Activated B cell treated with CpG ODN at 0.5 μM for 24 hours (primary cell): ENCODE measurements at regions of chr17 and their contacts with region 1.

Region 1: DNA sequence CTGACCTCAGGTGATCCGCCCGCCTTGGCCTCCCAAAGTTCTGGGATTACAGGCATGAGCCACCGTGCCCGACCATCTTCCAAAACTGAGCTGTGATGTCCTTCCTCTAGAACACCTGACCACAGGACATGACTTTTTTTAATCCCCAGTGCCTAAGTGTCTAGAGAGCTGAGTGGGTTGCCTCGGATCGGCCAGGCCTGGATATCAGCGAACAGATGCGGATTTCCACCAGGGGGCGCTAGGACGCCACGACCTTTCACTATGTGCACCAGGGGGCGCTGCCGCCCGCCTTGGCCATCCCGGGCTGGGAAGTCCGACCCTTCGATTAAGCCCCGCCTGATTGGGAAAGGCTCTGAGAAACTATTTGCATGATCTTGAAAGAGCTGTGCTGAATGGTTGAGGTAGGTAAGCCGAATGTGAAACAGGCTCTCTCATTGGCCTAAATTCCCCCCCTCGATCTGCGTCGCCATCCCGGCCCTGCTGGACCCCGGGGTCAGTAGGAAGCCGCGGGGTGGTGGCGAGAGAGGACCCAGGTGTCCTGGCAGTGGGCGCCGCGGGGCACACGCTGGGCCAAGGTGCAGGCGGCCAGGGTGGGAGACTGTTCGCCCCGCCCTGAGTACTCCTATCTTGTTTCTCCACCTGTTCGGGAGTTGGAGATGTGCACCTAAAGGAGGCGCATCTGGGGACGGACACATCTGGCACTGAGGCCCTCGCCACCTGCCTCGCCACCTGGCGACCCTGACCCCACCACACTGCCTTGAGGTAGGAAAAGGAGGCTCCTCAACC is at the start of gene ACBD4:
- DNase-seq: peak; percentile 97
- ATAC-seq: peak; percentile 84
- H3K4me3 Mint-ChIP-seq: peak within 1 kb of the TSS; percentile 90
- H3K27ac Mint-ChIP-seq: peak within 1 kb of the TSS; percentile 84
- H3K4me1 Mint-ChIP-seq: peaks cover 16% of the 10 kb centered on the region
- H3K27me3 Mint-ChIP-seq: peaks cover 4% of the 10 kb centered on the region
- CTCF ChIP-seq: peak; percentile 99
- total RNA-seq, gene ACBD4: 20.1 and 20.6 TPM in 2 replicates

Region 2: DNA sequence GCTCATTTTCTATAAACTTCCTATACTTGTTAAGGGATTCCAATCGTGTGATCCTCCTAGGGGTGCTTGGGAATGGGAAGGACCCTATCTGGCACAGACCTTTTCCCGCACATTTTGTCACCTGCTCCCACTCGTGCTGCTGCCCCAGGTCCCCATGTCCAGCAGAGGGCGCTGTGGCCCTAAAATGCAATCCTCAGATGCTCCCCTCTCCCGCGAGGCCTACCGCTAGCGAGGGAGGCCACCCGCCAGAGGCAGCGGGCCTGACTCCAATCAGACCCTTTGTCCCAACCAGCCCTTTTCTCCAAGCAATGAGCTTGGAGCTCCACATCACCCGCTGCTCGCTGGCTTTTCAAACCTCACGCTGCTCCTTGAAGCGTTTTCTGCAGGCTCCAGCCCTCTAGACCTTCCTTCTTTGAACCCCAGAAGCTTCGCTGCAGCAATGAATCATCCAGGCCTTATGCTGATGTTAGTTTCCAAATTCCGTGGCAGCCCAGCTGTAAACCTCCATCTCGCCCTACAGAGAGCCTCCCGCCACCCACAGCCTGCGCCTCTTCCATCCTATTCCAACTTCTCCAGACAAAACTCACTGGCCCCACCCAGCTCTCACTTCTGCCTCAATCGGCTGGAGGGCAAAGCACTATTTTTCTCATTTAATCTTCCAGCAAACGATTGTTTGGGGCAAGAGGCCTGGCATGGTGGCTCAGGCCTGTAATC is 601.7 kb before region 1 on chr17:
- CTCF ChIA-PET with region 1: no interaction called
- POLR2A ChIA-PET with region 1: no interaction called
- intact Hi-C with region 1: loop called (anchors 10 kb)
- DNase-seq: peak; percentile 82
- ATAC-seq: peak; percentile 94
- H3K4me3 Mint-ChIP-seq: peak overlapping the region; percentile 29
- H3K27ac Mint-ChIP-seq: peak overlapping the region; percentile 5
- H3K4me1 Mint-ChIP-seq: peaks cover 7% of the 10 kb centered on the region
- H3K27me3 Mint-ChIP-seq: peaks cover 6% of the 10 kb centered on the region
- CTCF ChIP-seq: peak; percentile 86

Region 3: DNA sequence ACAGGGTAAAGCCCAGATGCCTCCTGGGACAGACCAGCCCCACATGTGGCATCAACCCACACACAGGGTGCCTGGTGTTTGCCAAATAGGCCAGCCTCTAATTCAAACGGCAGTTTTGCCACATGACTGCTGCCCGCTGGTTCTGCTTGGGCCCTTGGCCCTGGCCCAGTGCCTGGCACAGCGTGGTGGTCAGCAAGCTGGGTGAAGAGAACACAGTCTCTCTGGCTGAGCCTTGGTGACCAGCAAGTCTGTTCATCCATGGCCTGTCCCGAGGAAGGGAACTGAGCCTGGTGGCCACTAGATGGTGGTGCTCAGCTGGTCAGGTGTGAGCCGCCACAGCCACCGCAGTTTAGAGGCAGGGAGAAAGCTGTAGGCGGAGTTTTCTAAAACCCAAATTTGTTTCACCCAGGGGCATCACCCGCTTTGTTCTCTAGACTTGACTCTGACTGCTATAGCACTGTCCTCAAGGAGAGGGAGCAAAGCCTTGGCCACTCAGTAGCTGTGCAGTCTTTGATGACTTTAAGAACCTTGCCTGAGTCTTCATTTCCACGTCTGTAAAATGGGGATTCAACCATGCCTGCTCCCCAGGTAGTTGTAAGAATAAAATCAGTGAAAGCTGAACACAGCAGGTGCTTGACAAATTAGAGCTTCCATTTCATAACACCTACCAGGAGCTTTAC is 215.4 kb before region 1 on chr17:
- CTCF ChIA-PET with region 1: interaction called, 5 read pairs
- POLR2A ChIA-PET with region 1: interaction called, 3 read pairs
- intact Hi-C with region 1: loop called (anchors 1 kb)
- DNase-seq: peak; percentile 42
- ATAC-seq: peak; percentile 94
- H3K4me3 Mint-ChIP-seq: no peak overlapping the region
- H3K27ac Mint-ChIP-seq: no peak overlapping the region
- H3K4me1 Mint-ChIP-seq: peaks cover 15% of the 10 kb centered on the region
- H3K27me3 Mint-ChIP-seq: peaks cover 15% of the 10 kb centered on the region
- CTCF ChIP-seq: peak; percentile 29

Region 4: DNA sequence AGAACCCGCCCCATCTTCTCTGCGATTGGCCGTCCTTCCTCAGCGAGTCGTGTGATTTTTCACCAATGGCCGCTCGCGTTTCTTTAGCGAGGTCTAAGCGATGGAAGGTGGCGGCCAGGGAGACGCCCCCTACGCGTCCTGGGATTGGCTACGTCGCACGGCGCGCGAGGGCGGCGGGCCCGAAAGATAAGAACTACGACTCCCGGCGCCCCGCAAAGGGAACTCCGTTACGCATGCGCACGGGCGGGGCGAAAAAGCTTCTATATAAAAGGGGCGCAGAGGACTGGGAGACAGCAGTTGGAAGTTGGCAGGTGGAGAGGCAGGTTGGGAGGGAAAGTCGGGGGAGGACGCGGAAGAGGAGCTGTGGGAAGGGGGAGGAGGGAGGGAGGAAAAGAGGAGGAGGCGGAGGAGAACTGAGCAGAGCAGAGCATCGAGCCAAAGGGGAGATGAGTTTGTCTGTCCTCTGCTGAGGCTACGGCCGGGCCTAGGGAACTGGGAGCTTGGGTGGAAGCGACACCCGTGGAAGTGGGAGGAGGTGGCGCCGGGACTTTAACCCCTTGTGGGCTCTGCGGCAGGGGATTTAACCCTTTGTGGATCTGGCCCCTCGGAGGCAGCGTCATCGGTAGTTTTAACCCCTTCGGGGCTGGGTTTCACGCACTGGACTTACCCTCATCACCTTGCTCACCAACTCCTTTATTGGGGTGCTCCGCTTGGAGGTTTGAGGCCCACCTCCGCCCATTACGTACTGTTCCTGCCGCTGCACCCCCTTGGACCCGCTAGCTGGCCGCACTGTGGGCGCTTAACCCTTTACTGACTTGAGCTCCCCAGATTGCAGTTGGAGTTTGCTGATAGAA is 13.0 kb after region 1 on chr17 and contains the start of gene HEXIM1:
- CTCF ChIA-PET with region 1: interaction called, 167 read pairs
- POLR2A ChIA-PET with region 1: interaction called, 200 read pairs
- intact Hi-C with region 1: loop called (anchors 1 kb)
- DNase-seq: peak; percentile 97
- ATAC-seq: peak; percentile 74
- H3K4me3 Mint-ChIP-seq: peak within 1 kb of the TSS; percentile 96
- H3K27ac Mint-ChIP-seq: peak within 1 kb of the TSS; percentile 100
- H3K4me1 Mint-ChIP-seq: peaks cover 61% of the 10 kb centered on the region
- H3K27me3 Mint-ChIP-seq: no peaks in the 10 kb centered on the region
- CTCF ChIP-seq: no peak
- total RNA-seq, gene HEXIM1: 19.5 and 21.5 TPM in 2 replicates

Region 5: DNA sequence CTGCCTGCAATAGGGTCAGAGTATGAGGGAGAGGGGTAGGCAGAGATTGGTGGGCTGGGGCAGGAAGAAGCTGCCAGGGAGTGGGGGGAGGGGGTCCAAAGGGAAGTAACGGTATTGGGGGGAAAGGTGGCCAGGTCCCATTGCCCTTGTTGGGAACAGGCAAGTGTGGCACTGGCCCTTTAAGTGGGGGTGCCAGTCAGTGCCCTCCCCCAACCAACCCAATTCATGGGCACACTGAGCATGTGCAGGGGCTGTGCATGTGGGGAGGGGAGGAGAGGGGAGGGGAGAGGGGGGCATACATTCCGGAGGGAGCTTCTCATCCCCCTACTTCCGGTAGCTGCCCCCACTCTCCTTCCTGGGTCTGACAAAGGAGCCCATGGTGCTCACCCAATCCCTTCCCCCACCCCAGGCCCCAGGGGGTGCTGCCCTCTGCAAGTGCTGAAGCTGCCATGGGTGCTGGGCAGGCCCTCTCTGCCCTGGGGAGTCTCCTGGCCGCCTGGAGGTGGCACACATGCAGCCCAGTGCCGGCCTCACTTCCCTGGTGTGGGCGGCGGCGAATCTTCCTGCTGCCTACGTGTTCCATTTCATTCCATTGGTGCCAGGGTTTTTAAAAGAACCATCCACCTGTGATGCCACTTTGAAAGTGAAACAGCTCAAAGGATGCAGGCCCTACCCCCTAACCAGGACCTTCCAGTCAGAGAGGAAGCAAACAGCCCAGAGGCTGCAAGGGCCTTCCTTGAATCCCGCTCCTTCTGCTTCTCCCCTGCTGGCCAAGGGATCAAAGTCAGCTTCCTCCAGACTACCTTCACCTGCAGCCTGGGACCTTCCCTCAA is 37.3 kb after region 1 on chr17:
- CTCF ChIA-PET with region 1: interaction called, 23 read pairs
- POLR2A ChIA-PET with region 1: no interaction called
- intact Hi-C with region 1: loop called (anchors 2 kb)
- DNase-seq: peak; percentile 52
- ATAC-seq: peak; percentile 91
- H3K4me3 Mint-ChIP-seq: peak overlapping the region; percentile 80
- H3K27ac Mint-ChIP-seq: peak overlapping the region; percentile 93
- H3K4me1 Mint-ChIP-seq: peaks cover 14% of the 10 kb centered on the region
- H3K27me3 Mint-ChIP-seq: no peaks in the 10 kb centered on the region
- CTCF ChIP-seq: no peak

Region 6: DNA sequence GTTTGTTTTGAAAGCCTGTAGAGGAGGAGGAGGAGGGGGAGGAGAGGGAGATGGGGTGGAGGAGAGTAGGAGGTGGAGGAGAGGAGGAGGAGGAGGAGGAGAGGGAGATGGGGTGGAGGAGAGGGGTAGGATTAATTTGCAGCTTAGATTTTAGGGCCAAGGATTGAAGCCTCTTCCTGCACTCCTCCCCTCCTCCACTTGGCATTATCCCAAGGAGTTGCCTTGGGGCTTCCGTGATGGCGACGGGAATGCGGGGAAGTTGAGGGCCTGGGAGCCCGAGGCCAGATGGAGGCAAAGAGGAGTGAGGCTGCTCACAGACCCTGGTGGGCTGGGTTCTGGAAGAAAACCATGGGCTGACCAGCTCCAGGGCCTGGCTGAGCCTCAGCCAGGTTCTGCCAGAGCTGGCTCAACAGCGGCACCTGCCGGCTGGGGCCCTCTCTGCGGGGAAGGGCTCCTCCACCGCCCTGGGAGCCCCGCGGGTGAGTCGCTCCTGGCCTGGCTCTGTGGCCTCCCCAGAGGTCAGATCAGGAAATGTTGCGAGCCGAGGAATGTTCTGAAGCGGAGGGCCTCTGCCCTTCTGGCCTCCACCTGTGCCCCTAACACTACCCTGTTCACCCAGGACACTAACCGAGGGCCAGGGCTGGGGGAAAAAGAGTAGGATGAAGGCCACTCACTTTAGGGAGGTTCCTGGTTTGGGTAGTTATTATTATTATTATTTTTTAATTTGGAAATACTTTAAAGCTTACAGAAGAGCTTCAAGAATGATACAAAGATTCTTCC is 62.4 kb after region 1 on chr17:
- CTCF ChIA-PET with region 1: interaction called, 161 read pairs
- POLR2A ChIA-PET with region 1: interaction called, 15 read pairs
- intact Hi-C with region 1: loop called (anchors 1 kb)
- DNase-seq: peak; percentile 91
- ATAC-seq: peak; percentile 100
- H3K4me3 Mint-ChIP-seq: no peak overlapping the region
- H3K27ac Mint-ChIP-seq: no peak overlapping the region
- H3K4me1 Mint-ChIP-seq: peaks cover 4% of the 10 kb centered on the region
- H3K27me3 Mint-ChIP-seq: no peaks in the 10 kb centered on the region
- CTCF ChIP-seq: no peak

Region 7: GRCh38 chr17:45385331-45385997 is 250.1 kb after region 1 on chr17:
- CTCF ChIA-PET with region 1: no interaction called
- POLR2A ChIA-PET with region 1: no interaction called
- intact Hi-C with region 1: loop called (anchors 1 kb)
- DNase-seq: peak; percentile 84
- ATAC-seq: peak; percentile 94
- H3K4me3 Mint-ChIP-seq: no peak overlapping the region
- H3K27ac Mint-ChIP-seq: no peak overlapping the region
- H3K4me1 Mint-ChIP-seq: peaks cover 7% of the 10 kb centered on the region
- H3K27me3 Mint-ChIP-seq: peaks cover 8% of the 10 kb centered on the region
- CTCF ChIP-seq: peak; percentile 35